ENCODE measurements at regions of chr9 and their contacts with region 1.

Region 1: DNA sequence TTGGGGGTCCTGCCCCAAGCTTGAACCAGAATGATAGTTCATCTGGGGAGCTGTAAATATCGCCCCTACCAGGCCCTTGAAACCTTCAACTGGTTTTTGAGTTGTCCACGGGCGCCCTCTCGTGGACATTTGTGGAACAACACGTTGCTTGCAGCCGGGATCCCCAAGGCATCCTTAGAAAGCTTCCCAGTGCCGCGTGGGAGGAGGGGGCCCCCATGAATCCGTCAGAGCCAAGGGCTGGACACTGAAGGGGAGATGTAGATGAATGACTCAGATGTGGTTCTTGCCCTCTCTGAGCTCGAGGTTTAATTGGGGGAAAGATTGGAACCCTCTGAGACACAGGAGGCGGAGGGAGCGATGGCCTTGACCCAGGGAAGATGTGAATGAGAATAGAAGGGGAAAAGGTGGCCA is 31.8 kb upstream of the ORM1 start:
- DNase-seq: peak; percentile 72
- H3K4me3 ChIP-seq: no peak overlapping the region
- H3K27ac ChIP-seq: no peak overlapping the region
- H3K4me1 ChIP-seq: no peaks in the 10 kb centered on the region
- H3K27me3 ChIP-seq: no peaks in the 10 kb centered on the region
- CTCF ChIP-seq: peak; percentile 77 to 79
- POLR2A ChIP-seq: no peak

Region 2: DNA sequence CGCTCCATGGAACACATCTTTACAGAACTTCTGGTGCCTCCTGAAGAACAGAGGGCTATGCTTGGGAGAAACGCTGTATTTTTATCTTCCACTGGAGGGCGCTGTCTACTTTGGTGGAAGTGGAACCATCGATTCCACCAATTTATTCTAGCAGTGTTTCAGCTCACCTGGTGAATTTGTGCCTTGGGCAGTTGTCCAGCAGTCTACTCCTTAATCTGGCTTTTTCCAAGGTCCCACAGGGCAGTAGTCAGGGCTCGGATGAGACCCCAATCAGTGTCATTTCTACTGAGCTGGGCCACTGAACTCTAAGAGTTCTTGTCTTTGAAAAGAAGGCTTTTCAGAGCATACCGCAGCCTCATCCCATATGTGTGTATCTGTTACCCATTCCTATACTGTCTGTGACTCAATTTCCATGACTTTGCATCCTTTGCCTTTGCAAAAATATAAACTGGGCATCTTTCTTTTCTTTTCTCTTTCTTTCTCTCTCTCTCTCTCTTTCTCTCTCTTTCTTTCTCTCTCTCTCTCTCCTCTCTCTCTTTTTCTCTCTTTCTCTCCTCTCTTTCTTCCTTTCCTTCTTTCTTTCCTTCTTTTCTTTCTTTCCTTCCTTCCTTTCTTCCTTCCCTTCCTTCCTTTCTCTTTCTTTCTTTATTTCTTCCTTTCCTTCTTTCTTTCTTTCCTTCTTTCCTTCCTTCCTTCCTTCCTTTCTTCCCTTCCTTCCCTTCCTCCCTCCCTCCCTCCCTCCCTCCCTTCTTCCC is 553.4 kb before region 1 on chr9:
- CTCF ChIA-PET with region 1: interaction called, 5 read pairs
- POLR2A ChIA-PET with region 1: no interaction called
- dilution Hi-C with region 1: no loop called
- intact Hi-C with region 1: loop called (anchors 5 kb)
- DNase-seq: peak; percentile 69
- H3K4me3 ChIP-seq: no peak overlapping the region
- H3K27ac ChIP-seq: no peak overlapping the region
- H3K4me1 ChIP-seq: no peaks in the 10 kb centered on the region
- H3K27me3 ChIP-seq: peaks cover 6 to 13% of the 10 kb centered on the region in 2 experiments
- CTCF ChIP-seq: peak; percentile 72 to 78
- POLR2A ChIP-seq: no peak

Region 3: DNA sequence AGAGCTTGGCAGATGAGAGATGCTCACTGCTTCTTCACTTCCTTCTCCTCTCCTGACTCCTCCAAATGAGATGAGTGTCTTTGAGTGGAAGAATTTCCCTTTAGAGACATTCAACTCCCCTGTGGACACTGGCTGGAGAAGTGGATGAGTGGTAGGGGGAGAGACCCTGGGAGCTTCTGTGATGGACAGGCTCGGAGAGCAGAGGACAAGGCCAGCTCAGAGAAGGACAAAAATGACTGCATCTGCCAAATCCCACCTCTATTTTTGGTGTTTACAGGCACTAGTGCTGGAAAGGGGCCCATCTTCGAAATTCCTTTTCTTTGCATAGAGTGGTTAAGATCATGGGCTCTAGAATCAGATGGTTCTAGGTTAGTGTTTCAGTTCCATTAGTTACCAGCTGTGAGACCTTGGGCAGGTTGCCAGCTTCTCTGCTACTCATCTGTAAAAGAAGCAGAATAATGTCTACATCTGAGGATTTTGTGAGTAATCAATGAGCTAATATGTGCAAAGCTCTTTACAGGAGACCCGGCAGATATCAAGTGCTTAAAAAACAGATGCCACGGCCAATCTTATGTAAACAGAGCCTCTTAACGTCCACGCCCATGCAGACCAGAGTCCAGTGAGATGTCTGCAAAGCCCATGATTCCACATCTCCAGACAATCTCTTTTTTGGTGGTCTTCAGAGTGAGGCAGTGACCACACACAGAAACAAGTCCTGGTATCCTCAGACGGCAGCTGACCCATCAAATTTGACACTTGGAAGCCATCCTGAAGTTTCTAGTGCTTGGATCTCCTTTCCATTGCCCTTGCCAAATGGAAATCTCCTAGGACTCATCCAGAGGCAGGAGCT is 149.3 kb before region 1 on chr9:
- CTCF ChIA-PET with region 1: interaction called, 14 read pairs
- POLR2A ChIA-PET with region 1: no interaction called
- dilution Hi-C with region 1: no loop called
- intact Hi-C with region 1: no loop called
- DNase-seq: no peak
- H3K4me3 ChIP-seq: no peak overlapping the region
- H3K27ac ChIP-seq: no peak overlapping the region
- H3K4me1 ChIP-seq: no peaks in the 10 kb centered on the region
- H3K27me3 ChIP-seq: peaks cover 26 to 33% of the 10 kb centered on the region in 2 experiments
- CTCF ChIP-seq: no peak
- POLR2A ChIP-seq: no peak

Region 4: DNA sequence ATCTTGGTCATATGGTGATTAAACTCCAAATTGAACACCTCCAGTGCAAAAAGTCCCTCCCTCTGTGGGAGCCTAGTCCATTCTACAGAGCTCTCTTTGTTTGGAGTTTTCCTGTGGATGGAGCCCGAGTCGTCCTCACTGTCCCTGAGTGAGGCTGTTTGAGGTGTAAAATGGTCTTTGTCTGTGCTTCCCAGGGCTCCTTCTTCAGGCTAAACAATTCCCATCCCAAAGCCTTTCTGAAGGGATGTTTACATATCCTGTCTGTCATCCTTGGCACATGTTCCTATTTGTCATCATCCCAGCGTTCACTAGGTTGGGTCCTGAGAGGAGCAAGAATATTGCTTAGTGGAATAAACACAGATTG is 66.8 kb before region 1 on chr9:
- CTCF ChIA-PET with region 1: interaction called, 13 read pairs
- POLR2A ChIA-PET with region 1: no interaction called
- dilution Hi-C with region 1: no loop called
- intact Hi-C with region 1: loop called (anchors 5 kb)
- DNase-seq: peak; percentile 51
- H3K4me3 ChIP-seq: no peak overlapping the region
- H3K27ac ChIP-seq: peak overlapping the region; percentile 91
- H3K4me1 ChIP-seq: peaks cover 69% of the 10 kb centered on the region
- H3K27me3 ChIP-seq: no peaks in the 10 kb centered on the region
- CTCF ChIP-seq: no peak
- POLR2A ChIP-seq: peak; percentile 26

Region 5: DNA sequence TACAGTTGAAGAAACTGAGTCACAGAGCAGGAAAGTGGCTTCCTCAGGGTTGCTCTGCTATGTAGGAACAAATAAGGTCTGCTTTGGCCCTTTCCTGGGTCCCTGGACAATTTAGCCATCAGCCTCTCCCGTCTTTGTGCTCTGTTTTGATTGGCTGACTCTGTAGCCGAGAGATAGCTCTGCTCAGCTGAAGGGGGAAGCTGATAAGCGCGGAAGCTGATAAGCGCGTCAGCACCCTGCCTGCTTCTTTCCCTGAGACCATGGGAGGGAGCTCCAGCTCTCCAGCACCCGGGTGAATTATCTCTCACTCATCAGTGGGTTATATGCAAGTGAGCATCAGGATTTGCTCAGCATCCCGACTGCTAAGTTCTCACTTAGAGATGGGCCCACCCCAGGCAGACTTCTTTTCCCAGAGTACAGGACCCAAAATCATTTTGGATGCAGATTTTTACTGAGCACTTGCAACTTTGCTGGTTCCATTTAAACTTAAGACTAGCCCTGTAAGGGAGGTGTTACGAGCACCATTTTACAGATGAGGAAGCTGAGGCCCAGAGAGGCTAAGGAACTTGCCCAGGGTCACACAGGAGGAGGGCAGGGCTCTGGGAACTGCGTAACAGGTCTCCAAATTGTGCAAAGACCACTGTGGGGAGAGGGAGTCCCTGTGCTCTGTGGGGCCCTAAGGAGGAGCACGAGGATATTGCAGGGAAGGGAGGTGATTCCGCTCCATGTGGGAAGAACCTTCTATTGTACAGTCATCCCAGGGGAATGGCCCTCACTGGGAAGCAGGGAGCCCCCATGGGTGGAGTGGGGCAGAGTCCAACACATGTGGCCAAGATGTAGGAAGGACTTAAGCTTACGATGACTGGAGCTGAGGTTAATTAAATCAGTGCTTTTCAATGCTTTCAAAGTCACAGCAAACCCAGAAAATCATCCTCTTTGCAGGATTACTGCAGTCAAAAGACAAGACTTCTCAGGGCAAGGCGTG is 51.9 kb before region 1 on chr9:
- CTCF ChIA-PET with region 1: interaction called, 37 read pairs
- POLR2A ChIA-PET with region 1: no interaction called
- dilution Hi-C with region 1: no loop called
- intact Hi-C with region 1: loop called (anchors 5 kb)
- DNase-seq: peak; percentile 51
- H3K4me3 ChIP-seq: no peak overlapping the region
- H3K27ac ChIP-seq: no peak overlapping the region
- H3K4me1 ChIP-seq: peaks cover 8% of the 10 kb centered on the region
- H3K27me3 ChIP-seq: no peaks in the 10 kb centered on the region
- CTCF ChIP-seq: peak in 1 of 2 donors; percentile 50
- POLR2A ChIP-seq: no peak

Region 6: GRCh38 chr9:114263853-114264510 is 27.1 kb before region 1 on chr9:
- CTCF ChIA-PET with region 1: interaction called, 37 read pairs
- POLR2A ChIA-PET with region 1: no interaction called
- dilution Hi-C with region 1: no loop called
- intact Hi-C with region 1: no loop called
- DNase-seq: no peak
- H3K4me3 ChIP-seq: no peak overlapping the region
- H3K27ac ChIP-seq: no peak overlapping the region
- H3K4me1 ChIP-seq: no peaks in the 10 kb centered on the region
- H3K27me3 ChIP-seq: no peaks in the 10 kb centered on the region
- CTCF ChIP-seq: peak in 1 of 2 donors; percentile 28
- POLR2A ChIP-seq: no peak

Region 7: GRCh38 chr9:114276908-114277821 is 13.9 kb before region 1 on chr9:
- CTCF ChIA-PET with region 1: interaction called, 30 read pairs
- POLR2A ChIA-PET with region 1: no interaction called
- dilution Hi-C with region 1: no loop called
- intact Hi-C with region 1: no loop called
- DNase-seq: peak; percentile 38
- H3K4me3 ChIP-seq: no peak overlapping the region
- H3K27ac ChIP-seq: peak overlapping the region; percentile 42
- H3K4me1 ChIP-seq: peaks cover 2% of the 10 kb centered on the region
- H3K27me3 ChIP-seq: no peaks in the 10 kb centered on the region
- CTCF ChIP-seq: no peak
- POLR2A ChIP-seq: no peak

Region 8: DNA sequence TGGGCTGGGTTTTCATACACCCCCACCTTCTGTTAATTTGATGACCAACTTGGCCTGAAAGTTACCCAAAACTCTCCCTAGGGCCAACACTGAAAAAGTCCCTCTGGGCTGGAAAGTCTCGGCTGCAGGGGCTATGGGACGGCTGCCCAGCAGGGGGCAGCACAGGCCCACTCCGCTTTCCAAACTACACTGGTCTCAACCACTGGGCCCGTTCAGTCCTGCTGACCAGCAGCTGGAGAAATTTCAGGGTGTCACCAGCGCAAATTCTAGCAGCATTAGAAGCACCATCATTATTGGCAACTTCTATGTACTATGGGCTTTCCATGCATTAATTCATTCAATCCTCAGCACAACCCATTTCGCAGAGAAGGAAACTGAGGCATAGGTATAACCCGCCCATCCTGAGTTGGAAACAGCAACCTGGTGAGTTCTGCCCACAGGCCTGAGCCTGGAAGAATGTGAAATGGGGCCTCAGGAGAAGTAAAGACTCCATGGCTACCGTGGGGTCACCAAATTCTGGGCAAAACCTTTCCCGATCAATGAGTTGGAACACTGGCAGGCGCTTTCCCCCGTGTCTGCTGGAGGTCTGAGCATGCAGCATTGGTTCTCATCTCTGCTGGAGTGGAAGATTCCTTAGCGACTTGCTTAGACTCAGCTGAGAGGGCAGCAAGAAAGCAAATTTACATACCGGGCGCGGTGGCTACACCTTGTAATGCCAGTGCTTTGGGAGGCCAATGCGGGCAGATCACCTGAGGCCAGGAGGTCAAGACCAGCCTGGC is 48.2 kb after region 1 on chr9:
- CTCF ChIA-PET with region 1: no interaction called
- POLR2A ChIA-PET with region 1: no interaction called
- dilution Hi-C with region 1: no loop called
- intact Hi-C with region 1: no loop called
- DNase-seq: peak; percentile 29
- H3K4me3 ChIP-seq: no peak overlapping the region
- H3K27ac ChIP-seq: no peak overlapping the region
- H3K4me1 ChIP-seq: no peaks in the 10 kb centered on the region
- H3K27me3 ChIP-seq: no peaks in the 10 kb centered on the region
- CTCF ChIP-seq: peak; percentile 88 to 89
- POLR2A ChIP-seq: no peak